ENCODE measurements at regions of chr16 and their contacts with region 1.

Region 1: DNA sequence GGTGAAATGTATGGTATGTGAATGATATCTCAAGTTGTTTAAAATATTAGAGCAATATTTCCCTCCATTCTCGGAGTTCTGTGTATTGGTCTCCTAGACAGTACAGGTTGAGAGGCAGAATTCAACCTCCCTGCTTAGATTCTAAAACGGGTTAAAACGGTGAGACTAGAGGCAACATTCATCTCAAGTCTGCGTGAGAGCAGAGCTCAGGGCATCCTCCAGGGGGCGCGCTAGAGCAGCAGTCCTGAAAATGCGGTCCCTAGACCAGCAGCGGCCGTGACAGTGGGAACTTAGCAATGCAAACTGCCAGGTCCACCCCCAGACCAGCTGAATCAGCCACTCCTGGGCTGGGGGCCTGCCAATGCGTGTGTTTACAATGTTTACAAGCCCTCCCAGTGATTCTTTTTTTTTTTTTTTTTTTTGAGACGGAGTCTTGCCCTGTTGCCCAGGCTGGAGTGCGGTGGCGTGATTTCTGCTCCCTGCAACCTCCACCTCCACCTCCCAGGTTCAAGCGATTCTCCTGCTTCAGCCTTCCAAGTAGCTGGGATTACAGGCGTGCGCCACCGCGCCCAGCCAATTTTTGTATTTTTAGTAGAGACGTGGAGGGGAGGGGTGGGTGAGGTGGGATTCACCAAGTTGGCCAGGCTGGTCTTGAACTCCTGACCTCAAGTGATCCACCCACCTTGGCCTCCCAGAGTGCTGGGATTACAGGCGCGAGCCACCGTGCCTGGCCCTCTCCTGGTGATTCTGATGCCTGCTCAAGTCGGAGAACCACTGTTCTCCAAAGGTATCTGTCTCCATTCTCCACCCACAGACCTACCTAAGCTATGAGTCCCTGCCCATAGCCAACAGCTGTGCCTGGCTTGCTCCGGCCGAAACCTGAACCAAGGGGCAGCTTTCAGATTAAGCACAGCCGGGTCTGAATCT is 24.2 kb downstream of the KLHL36 start:
- DNase-seq: peak; percentile 79 to 85 (median 83)
- ATAC-seq: peak; percentile 91 to 98 (median 95)
- H3K4me3 ChIP-seq: no peak overlapping the region
- H3K27ac ChIP-seq: no peak overlapping the region
- H3K4me1 ChIP-seq: peaks cover 0 to 5% (median 0%) of the 10 kb centered on the region in 4 donors
- H3K27me3 ChIP-seq: no peaks in the 10 kb centered on the region
- CTCF ChIP-seq: peak; percentile 88 to 94 (median 90)
- POLR2A ChIP-seq: no peak

Region 2: GRCh38 chr16:84294531-84295142 is 377.9 kb before region 1 on chr16 and contains the start of gene WFDC1:
- intact Hi-C with region 1: no loop called
- DNase-seq: no peak
- ATAC-seq: peak; percentile 28 to 49 (median 42)
- H3K4me3 ChIP-seq: peak within 1 kb of the TSS in 2 of 3 donors; percentile 7
- H3K27ac ChIP-seq: no peak within 1 kb of the TSS
- H3K4me1 ChIP-seq: no peaks in the 10 kb centered on the region
- H3K27me3 ChIP-seq: no peaks in the 10 kb centered on the region
- CTCF ChIP-seq: no peak
- POLR2A ChIP-seq: no peak
- total RNA-seq, gene WFDC1: 0.64 to 5.0 (median 2.3) TPM

Region 3: DNA sequence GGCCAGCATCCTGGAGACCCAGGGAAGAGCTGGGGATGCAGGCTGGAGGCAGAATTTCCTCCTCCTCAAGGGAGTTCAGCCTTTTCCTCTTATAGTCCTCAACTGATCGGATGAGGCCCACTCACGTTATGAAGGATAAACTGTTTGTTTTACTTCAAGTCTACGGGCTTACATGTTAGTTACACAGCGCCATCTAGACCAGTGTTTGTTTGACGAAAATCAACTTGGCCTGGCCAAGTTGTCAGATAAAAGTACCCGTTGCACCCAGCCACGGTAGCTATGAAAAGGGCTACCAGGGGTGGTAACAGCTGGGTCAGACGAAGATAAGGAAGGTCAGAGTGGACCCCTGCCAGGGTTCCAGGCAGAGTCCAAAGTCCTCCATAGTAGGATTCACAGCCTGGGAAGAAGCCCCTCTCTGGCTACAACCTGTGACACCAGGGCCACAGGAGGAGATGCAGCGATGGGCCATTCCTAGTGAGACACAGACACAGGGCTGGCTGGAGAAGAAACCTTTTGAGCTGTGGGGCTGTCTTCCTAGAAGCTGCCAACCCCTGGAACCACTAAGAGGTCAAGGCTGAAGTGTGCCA is 207.5 kb before region 1 on chr16:
- intact Hi-C with region 1: no loop called
- DNase-seq: peak in 1 of 3 donors; percentile 23
- ATAC-seq: no peak
- H3K4me3 ChIP-seq: no peak overlapping the region
- H3K27ac ChIP-seq: no peak overlapping the region
- H3K4me1 ChIP-seq: no peaks in the 10 kb centered on the region
- H3K27me3 ChIP-seq: no peaks in the 10 kb centered on the region
- CTCF ChIP-seq: no peak
- POLR2A ChIP-seq: no peak

Region 4: DNA sequence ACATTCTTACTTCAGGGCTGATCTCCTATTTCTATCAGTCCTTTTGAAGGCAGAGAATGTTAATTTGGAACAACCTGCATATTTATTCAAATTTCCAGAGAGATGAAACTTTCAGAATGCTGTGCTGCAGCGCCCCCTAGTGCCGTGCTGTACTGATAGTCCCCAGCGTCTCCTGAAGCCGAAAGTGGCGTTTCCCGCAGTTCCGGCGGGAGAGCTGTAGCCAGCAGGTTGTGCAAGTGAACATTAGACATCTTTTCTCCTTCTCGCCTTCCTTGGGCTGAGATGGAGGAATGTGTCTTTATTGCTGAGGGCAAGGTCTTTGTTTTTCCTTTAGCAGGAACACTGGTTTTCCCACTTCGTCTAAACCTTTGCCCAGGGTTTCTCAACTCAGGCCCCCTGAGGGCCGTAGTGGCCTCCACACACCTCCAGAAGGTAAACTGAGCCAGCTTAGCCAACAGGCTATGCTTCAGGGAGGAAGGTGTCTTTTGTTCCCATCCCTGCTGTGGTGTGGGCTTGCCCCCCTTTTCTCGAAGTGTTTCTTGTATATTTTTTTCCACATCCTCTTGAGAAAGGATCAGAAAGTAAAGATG is 53.6 kb after region 1 on chr16:
- intact Hi-C with region 1: loop called (anchors 5 to 10 kb)
- DNase-seq: peak; percentile 86 to 89 (median 88)
- ATAC-seq: peak; percentile 86 to 91 (median 88)
- H3K4me3 ChIP-seq: no peak overlapping the region
- H3K27ac ChIP-seq: no peak overlapping the region
- H3K4me1 ChIP-seq: peaks cover 0 to 56% (median 15%) of the 10 kb centered on the region in 4 donors
- H3K27me3 ChIP-seq: no peaks in the 10 kb centered on the region
- CTCF ChIP-seq: peak; percentile 93 to 99 (median 96)
- POLR2A ChIP-seq: no peak

Measured in right lobe of liver (tissue), 6 donors.